CD4-positive, alpha-beta T cell (primary cell): ENCODE measurements at regions of chr17 and their contacts with region 1.

Region 1: GRCh38 chr17:1764284-1764683 is 2.4 kb downstream of the SERPINF1 start:
- DNase-seq: peak; percentile 49 to 90 (median 68)
- ATAC-seq: peak; percentile 95
- H3K4me3 ChIP-seq: peak overlapping the region; percentile 7
- H3K4me3 Mint-ChIP-seq: peak overlapping the region; percentile 21
- H3K27ac ChIP-seq: peak overlapping the region; percentile 54 to 80
- H3K27ac Mint-ChIP-seq: peak overlapping the region; percentile 83
- H3K4me1 ChIP-seq: peaks cover 59% of the 10 kb centered on the region
- H3K4me1 Mint-ChIP-seq: peaks cover 49% of the 10 kb centered on the region
- H3K27me3 ChIP-seq: no peaks in the 10 kb centered on the region
- H3K27me3 Mint-ChIP-seq: no peaks in the 10 kb centered on the region
- CTCF ChIP-seq: no peak

Region 2: GRCh38 chr17:1658100-1658499 is 106.2 kb before region 1 on chr17:
- CTCF ChIA-PET with region 1: no interaction called
- POLR2A ChIA-PET with region 1: no interaction called
- intact Hi-C with region 1: loop called in 1 of 2 experiments (anchors 10 kb)
- DNase-seq: no peak
- ATAC-seq: no peak
- H3K4me3 ChIP-seq: no peak overlapping the region
- H3K4me3 Mint-ChIP-seq: no peak overlapping the region
- H3K27ac ChIP-seq: no peak overlapping the region
- H3K27ac Mint-ChIP-seq: no peak overlapping the region
- H3K4me1 ChIP-seq: no peaks in the 10 kb centered on the region
- H3K4me1 Mint-ChIP-seq: no peaks in the 10 kb centered on the region
- H3K27me3 ChIP-seq: no peaks in the 10 kb centered on the region
- H3K27me3 Mint-ChIP-seq: no peaks in the 10 kb centered on the region
- CTCF ChIP-seq: no peak

Region 3: GRCh38 chr17:1709971-1710806 is 54.1 kb before region 1 on chr17 and contains the start of gene TLCD2:
- CTCF ChIA-PET with region 1: no interaction called
- POLR2A ChIA-PET with region 1: no interaction called
- intact Hi-C with region 1: no loop called
- DNase-seq: peak in 3 of 14 experiments; percentile 31 to 39 (median 32)
- ATAC-seq: peak; percentile 15
- H3K4me3 ChIP-seq: peak within 1 kb of the TSS; percentile 61
- H3K4me3 Mint-ChIP-seq: peak within 1 kb of the TSS; percentile 86
- H3K27ac ChIP-seq: no peak within 1 kb of the TSS
- H3K27ac Mint-ChIP-seq: peak within 1 kb of the TSS; percentile 48
- H3K4me1 ChIP-seq: peaks cover 61% of the 10 kb centered on the region
- H3K4me1 Mint-ChIP-seq: peaks cover 28% of the 10 kb centered on the region
- H3K27me3 ChIP-seq: peaks cover 19 to 28% of the 10 kb centered on the region in 2 experiments
- H3K27me3 Mint-ChIP-seq: peaks cover 17% of the 10 kb centered on the region
- CTCF ChIP-seq: no peak
- total RNA-seq, gene TLCD2: 0.19 to 0.34 TPM

Region 4: DNA sequence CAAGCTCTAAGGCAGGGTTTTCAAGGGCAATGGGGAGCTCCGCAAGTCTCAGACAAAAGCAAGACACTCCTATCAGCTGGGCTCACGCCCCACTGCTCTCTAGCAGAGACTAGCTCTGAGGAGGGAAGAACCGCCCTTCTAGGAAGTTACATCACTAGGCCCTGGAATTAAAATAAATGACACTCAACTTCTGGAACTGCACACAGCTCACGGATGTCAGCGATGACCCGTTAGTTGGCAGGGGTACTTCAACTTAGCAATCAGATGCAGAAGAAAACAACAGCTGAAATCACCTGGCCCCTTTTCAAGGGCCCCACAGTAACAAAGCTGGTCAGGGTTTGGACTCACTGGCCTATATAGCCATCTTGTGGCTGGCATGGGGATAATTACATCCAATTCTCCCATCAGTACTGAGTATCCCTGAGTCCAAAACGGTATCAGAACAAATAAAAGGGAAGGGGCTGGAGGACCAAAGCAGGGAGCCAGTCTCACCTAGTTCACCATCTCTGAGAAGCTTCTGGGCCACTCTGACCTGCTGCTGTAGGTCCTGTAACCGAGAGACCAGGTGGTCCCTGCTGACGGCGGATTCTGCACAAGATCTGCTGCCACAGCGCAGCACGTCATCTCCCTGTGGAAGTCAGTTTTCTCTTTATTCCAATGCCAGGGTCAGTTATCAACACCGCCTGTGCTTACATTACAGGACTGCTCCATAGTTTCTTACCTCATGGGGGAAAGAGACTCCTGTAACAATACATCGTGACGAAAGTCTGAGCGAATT is 19.7 kb after region 1 on chr17:
- CTCF ChIA-PET with region 1: interaction called, 4 read pairs
- POLR2A ChIA-PET with region 1: interaction called, 33 read pairs
- intact Hi-C with region 1: no loop called
- DNase-seq: peak in 3 of 14 experiments; percentile 31 to 65 (median 54)
- ATAC-seq: peak; percentile 68
- H3K4me3 ChIP-seq: no peak overlapping the region
- H3K4me3 Mint-ChIP-seq: no peak overlapping the region
- H3K27ac ChIP-seq: no peak overlapping the region
- H3K27ac Mint-ChIP-seq: peak overlapping the region; percentile 76
- H3K4me1 ChIP-seq: peaks cover 10% of the 10 kb centered on the region
- H3K4me1 Mint-ChIP-seq: peaks cover 10% of the 10 kb centered on the region
- H3K27me3 ChIP-seq: no peaks in the 10 kb centered on the region
- H3K27me3 Mint-ChIP-seq: no peaks in the 10 kb centered on the region
- CTCF ChIP-seq: peak; percentile 53

Region 5: DNA sequence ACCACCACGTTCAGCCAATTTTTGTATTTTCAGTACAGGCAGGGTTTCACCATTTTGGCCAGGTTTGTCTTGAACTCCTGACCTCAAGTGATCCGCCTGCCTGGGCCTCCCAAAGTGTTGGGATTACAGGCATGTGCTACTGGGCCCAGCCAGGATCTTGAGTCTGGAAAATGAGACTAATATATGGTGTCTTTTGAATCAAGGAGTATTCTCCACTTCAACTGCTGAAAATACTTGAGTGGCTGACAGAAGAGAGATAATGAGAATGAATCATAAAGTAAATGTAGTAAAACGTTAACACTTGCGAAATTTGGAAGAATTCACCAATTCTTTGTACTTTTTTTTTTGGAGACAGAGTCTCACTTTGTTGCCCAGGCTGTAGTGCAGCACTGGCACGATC is 48.8 kb after region 1 on chr17:
- CTCF ChIA-PET with region 1: no interaction called
- POLR2A ChIA-PET with region 1: no interaction called
- intact Hi-C with region 1: no loop called
- DNase-seq: no peak
- ATAC-seq: no peak
- H3K4me3 ChIP-seq: no peak overlapping the region
- H3K4me3 Mint-ChIP-seq: no peak overlapping the region
- H3K27ac ChIP-seq: no peak overlapping the region
- H3K27ac Mint-ChIP-seq: no peak overlapping the region
- H3K4me1 ChIP-seq: no peaks in the 10 kb centered on the region
- H3K4me1 Mint-ChIP-seq: no peaks in the 10 kb centered on the region
- H3K27me3 ChIP-seq: no peaks in the 10 kb centered on the region
- H3K27me3 Mint-ChIP-seq: no peaks in the 10 kb centered on the region
- CTCF ChIP-seq: no peak

Region 6: DNA sequence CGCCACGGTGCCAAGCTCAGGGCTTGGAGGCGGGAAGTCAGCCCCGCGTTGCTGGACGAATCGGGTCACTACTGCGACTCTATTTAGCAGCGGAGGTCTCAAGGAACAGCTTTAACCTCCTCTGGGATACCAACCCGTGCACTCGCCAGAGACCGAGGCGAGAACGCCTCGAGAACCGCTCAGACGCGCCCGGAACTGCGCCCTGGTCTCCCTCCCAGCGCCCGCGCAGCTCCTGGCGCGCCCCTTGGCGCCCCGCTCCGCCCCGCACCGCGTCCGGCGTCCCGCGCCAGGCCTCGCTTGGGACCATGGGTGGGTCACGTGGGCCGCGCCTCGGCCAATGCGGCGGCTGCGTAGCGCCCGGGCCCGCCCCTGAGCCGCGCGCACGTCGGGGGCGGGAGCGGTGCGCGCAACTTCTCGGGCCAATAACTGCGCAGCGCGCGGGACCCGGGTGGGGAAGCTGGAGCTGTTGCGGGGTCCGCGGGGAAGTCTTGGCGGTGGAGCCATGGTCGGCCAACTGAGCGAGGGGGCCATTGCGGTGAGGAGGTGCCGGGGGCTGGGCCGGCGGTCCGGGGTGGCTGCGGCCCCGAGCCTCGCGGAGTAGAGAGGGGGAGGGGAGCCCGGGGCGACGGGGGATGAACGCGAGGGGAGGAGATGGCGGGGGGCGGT is 65.4 kb after region 1 on chr17 and contains the starts of genes RPA1 and SMYD4:
- CTCF ChIA-PET with region 1: no interaction called
- POLR2A ChIA-PET with region 1: interaction called, 16 read pairs
- intact Hi-C with region 1: loop called in 1 of 2 experiments (anchors 5 kb)
- DNase-seq: peak; percentile 71 to 95 (median 84)
- ATAC-seq: peak; percentile 98
- H3K4me3 ChIP-seq: peak within 1 kb of the TSS; percentile 87
- H3K4me3 Mint-ChIP-seq: peak within 1 kb of the TSS; percentile 99
- H3K27ac ChIP-seq: peak within 1 kb of the TSS; percentile 61 to 81
- H3K27ac Mint-ChIP-seq: peak within 1 kb of the TSS; percentile 90
- H3K4me1 ChIP-seq: peaks cover 51% of the 10 kb centered on the region
- H3K4me1 Mint-ChIP-seq: peaks cover 66% of the 10 kb centered on the region
- H3K27me3 ChIP-seq: no peaks in the 10 kb centered on the region
- H3K27me3 Mint-ChIP-seq: no peaks in the 10 kb centered on the region
- CTCF ChIP-seq: no peak
- total RNA-seq, gene RPA1: 38.6 to 38.7 TPM
- total RNA-seq, gene SMYD4: 9.3 to 10.6 TPM

Region 7: DNA sequence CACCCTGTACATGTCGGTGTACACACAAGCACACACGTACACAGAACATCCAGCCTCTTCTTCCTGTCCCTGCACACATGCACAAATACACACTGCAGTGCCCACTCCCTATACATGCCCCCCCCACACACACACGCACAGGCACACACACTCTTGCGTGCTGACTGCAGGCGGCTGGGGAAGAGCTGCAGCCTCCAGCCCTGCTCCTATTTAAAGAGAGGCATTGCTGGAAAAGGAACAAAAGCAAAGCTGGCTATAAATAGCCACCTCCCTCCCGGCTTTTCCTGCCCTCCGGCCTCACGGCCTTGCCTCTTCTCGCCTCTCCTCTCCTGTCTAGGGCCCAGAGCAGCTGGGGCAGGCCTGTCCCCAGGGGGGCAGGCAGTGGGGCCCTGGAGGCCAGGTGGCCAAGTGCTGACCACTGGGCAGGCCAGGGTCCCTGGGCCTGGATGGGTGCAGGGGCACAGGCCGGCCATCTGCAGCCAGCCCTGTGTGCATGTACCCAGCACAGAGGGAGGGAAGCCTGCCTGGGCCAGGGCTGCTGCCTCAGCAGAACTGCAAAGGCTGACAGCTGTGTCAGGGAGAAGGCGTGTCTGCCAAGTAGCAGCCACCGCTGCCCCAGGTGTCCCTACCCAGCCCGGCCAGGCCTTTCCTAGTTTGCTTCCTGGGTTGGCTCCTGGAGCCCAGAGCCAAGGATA is 235.4 kb after region 1 on chr17:
- CTCF ChIA-PET with region 1: no interaction called
- POLR2A ChIA-PET with region 1: no interaction called
- intact Hi-C with region 1: no loop called
- DNase-seq: no peak
- ATAC-seq: no peak
- H3K4me3 ChIP-seq: no peak overlapping the region
- H3K4me3 Mint-ChIP-seq: peak overlapping the region; percentile 16
- H3K27ac ChIP-seq: no peak overlapping the region
- H3K27ac Mint-ChIP-seq: no peak overlapping the region
- H3K4me1 ChIP-seq: no peaks in the 10 kb centered on the region
- H3K4me1 Mint-ChIP-seq: no peaks in the 10 kb centered on the region
- H3K27me3 ChIP-seq: peaks cover 20 to 21% of the 10 kb centered on the region in 2 experiments
- H3K27me3 Mint-ChIP-seq: peaks cover 33% of the 10 kb centered on the region
- CTCF ChIP-seq: no peak